Aorta (tissue), 5 donors: ENCODE measurements at regions of chr2 and their contacts with region 1.

Region 1: DNA sequence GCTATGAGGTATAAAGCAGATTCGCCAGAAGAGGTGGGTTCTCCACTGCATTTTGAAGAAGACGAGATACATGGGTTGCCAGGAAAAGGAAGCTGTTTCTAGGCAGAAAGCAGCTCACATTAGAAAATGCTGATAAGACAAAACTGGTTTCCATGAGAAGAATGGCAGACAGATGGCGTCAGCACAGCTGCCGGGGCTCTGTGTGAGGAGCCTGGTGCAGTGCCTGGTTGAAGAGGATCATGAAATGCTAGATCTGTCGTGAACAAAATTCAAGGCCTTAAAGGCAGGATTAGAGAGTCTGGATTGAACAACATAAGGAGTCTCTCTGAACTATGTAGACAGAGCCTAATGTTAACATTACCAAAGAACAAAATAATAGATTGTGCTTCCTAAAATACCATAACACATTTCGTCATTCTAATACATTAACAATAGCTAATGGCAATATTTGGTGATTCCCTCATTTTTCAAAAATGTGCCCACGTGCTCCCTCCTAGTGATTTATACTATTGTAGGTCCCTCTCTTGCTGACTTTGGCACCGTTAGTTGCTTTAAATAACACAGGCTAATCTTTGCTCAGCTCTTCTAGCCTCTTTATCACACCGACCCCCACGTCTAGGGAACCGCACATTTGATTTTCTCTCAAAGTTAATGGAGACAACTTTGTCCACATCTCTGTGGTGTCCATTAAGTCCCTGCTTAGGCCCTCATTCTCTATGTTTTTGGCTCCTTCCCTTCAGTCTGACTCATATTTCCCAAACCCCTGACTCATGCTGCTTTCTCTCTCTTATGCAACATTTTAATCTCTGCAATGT is 38.2 kb downstream of the EFEMP1 start:
- DNase-seq: peak in 1 of 2 donors; percentile 67
- ATAC-seq: peak; percentile 84
- H3K4me3 ChIP-seq: no peak overlapping the region
- H3K27ac ChIP-seq: peak overlapping the region; percentile 93 to 94
- H3K4me1 ChIP-seq: peaks cover 0 to 10% of the 10 kb centered on the region in 2 donors
- H3K27me3 ChIP-seq: no peaks in the 10 kb centered on the region

Region 2: GRCh38 chr2:55862673-55863390 is 22.5 kb before region 1 on chr2:
- intact Hi-C with region 1: loop called in 1 of 2 experiments (anchors 2 kb)
- DNase-seq: peak in 1 of 2 donors; percentile 59
- ATAC-seq: peak; percentile 91
- H3K4me3 ChIP-seq: no peak overlapping the region
- H3K27ac ChIP-seq: peak overlapping the region; percentile 95 to 98
- H3K4me1 ChIP-seq: peaks cover 8 to 9% of the 10 kb centered on the region in 2 donors
- H3K27me3 ChIP-seq: no peaks in the 10 kb centered on the region

Region 3: DNA sequence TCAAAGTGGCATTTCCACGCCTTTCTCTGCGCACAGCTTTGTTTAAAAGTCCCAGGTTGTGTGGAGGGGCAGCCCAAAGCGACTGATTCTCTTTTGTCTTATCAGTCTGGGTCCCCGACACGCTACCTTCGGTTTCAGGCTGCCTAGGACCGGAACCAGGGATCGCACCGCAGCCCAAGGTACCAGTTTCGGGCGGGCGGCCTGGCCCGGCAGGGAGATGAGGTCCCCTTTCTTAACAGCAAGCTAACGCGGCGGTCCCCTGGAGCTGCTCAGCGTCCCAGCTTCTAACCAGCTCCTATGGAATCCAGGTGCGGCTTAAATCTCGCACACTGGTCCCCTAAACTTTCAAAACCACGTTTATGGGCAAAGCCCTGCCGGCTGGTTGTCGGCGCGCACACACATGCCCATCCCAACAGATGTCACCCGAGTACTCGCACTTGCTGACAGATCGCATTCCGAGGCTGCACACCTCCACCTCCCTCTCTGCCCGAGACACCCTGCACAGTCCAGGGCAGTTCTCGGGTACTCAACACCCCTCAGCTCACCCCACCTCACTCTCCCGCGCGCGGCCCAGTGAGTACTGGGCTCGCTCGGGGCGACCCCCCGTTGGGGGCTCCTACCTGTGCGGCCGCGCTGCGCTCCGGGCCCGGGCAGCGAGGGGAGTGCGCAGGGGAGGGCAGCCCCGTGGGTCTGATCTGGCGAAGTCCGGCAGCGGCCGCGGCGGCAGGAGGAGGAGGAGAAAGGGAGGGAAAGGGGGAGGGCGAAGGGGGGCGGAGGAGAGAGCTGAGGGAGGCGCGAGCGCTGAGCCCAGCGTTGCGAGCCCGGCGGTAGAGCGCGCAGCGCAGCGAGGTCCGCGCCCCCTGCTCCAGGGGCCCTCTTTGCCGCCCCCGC is 38.0 kb after region 1 on chr2 and contains the start of gene EFEMP1:
- intact Hi-C with region 1: loop called (anchors 5 kb)
- DNase-seq: peak; percentile 89 to 94
- ATAC-seq: peak; percentile 94
- H3K4me3 ChIP-seq: peak within 1 kb of the TSS; percentile 51 to 84
- H3K27ac ChIP-seq: peak within 1 kb of the TSS in 1 of 2 donors; percentile 54
- H3K4me1 ChIP-seq: peaks cover 0 to 4% of the 10 kb centered on the region in 2 donors
- H3K27me3 ChIP-seq: no peaks in the 10 kb centered on the region
- total RNA-seq, gene EFEMP1: 793 to 989 TPM